CD14-positive monocyte (primary cell): ENCODE measurements at regions of chrX and their contacts with region 1.

Region 1: GRCh38 chrX:20252381-20253231 is 14.1 kb downstream of the RPS6KA3 start:
- DNase-seq: peak; percentile 51 to 65 (median 64)
- H3K4me3 ChIP-seq: no peak overlapping the region
- H3K4me3 Mint-ChIP-seq: no peak overlapping the region
- H3K27ac ChIP-seq: peak overlapping the region in 1 of 2 donors; percentile 37
- H3K27ac Mint-ChIP-seq: peak overlapping the region in 3 of 7 donors; percentile 25 to 72 (median 40)
- H3K4me1 ChIP-seq: peaks cover 23 to 36% of the 10 kb centered on the region in 2 donors
- H3K4me1 Mint-ChIP-seq: peaks cover 45% of the 10 kb centered on the region
- H3K27me3 ChIP-seq: no peaks in the 10 kb centered on the region
- H3K27me3 Mint-ChIP-seq: peaks cover 0 to 7% (median 0%) of the 10 kb centered on the region in 3 donors
- CTCF ChIP-seq: peak; percentile 66

Region 2: GRCh38 chrX:20442597-20442996 is 190.0 kb after region 1 on chrX:
- intact Hi-C with region 1: loop called (anchors 2 to 5 kb)
- DNase-seq: peak; percentile 66 to 82 (median 73)
- H3K4me3 ChIP-seq: no peak overlapping the region
- H3K4me3 Mint-ChIP-seq: no peak overlapping the region
- H3K27ac ChIP-seq: no peak overlapping the region
- H3K27ac Mint-ChIP-seq: no peak overlapping the region
- H3K4me1 ChIP-seq: peaks cover 13 to 16% of the 10 kb centered on the region in 2 donors
- H3K4me1 Mint-ChIP-seq: peaks cover 17% of the 10 kb centered on the region
- H3K27me3 ChIP-seq: no peaks in the 10 kb centered on the region
- H3K27me3 Mint-ChIP-seq: peaks cover 0 to 1% (median 0%) of the 10 kb centered on the region in 3 donors
- CTCF ChIP-seq: peak; percentile 63